ENCODE measurements at regions of chr1 and their contacts with region 1.

Region 1: DNA sequence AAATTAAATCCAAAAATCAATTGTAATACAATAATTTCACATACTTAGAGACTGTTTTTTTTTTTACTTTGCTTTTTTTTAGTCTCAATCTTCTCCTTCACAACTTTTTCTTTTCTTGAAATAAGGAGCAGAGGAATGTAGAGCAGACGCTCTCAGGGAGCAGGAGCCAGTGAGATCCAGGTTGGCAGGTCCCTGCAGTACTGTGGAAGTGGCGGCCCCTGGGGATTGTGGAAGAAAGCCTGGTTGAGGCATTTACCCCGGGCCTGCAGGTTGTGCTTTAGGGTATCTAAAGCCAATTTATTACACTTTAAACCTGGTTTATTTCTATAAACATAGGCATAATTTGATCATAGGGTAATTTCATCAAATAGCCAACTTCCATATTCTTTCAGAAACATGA is 748 bp upstream of the OR2AJ1 start:
- DNase-seq: no peak
- ATAC-seq: no peak
- H3K4me3 ChIP-seq: no peak overlapping the region
- H3K27ac ChIP-seq: no peak overlapping the region
- H3K4me1 ChIP-seq: no peaks in the 10 kb centered on the region
- H3K27me3 ChIP-seq: no peaks in the 10 kb centered on the region
- CTCF ChIP-seq: no peak
- POLR2A ChIP-seq: no peak

Region 2: GRCh38 chr1:247738800-247739199 is 185.1 kb before region 1 on chr1:
- intact Hi-C with region 1: loop called in 1 of 10 experiments (anchors 10 kb)
- DNase-seq: no peak
- ATAC-seq: no peak
- H3K4me3 ChIP-seq: no peak overlapping the region
- H3K27ac ChIP-seq: no peak overlapping the region
- H3K4me1 ChIP-seq: no peaks in the 10 kb centered on the region
- H3K27me3 ChIP-seq: no peaks in the 10 kb centered on the region
- CTCF ChIP-seq: no peak
- POLR2A ChIP-seq: no peak

Region 3: DNA sequence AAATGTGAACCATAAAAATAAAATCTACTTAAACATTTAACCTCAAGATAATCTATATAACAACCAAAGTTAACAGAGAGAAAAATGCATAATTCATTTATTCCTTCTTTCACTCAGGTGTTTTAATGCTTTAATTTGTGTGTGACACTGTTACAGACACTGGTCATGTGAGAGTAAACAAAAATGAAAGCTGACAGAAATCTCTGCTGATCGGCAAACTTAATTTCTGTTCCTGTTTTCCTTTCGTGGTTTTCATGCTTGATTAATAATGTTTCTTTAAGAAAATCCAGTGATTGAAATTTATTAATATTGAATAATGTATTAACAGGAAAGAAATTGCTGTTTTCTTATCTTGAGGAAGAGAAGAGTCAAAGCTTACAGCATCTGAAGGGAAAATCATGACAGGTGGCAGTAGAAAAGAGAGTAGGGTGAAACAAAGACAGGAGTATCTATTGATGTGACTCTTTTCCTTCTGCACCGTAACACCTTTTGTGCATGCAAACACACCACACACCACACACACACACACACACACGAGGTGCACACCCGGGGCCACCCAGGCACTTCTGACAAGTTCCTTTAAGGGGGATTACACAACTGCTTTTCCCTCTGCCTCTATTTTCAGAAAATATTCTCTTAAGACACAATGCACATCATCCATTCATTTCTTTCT is 42.7 kb after region 1 on chr1:
- intact Hi-C with region 1: no loop called
- DNase-seq: no peak
- ATAC-seq: no peak
- H3K4me3 ChIP-seq: no peak overlapping the region
- H3K27ac ChIP-seq: no peak overlapping the region
- H3K4me1 ChIP-seq: no peaks in the 10 kb centered on the region
- H3K27me3 ChIP-seq: no peaks in the 10 kb centered on the region
- CTCF ChIP-seq: no peak
- POLR2A ChIP-seq: no peak